ENCODE measurements at regions of chr10 and their contacts with region 1.

Region 1: GRCh38 chr10:119650692-119651513 is at the start of gene BAG3:
- H3K4me3 ChIP-seq: peak within 1 kb of the TSS; percentile 83
- H3K27ac ChIP-seq: peak within 1 kb of the TSS; percentile 86
- H3K4me1 ChIP-seq: peaks cover 25% of the 10 kb centered on the region
- CTCF ChIP-seq: no peak

Region 2: GRCh38 chr10:119421887-119422681 is 228.8 kb before region 1 on chr10:
- CTCF ChIA-PET with region 1: no interaction called
- POLR2A ChIA-PET with region 1: no interaction called
- H3K4me3 ChIP-seq: no peak overlapping the region
- H3K27ac ChIP-seq: no peak overlapping the region
- H3K4me1 ChIP-seq: no peaks in the 10 kb centered on the region
- CTCF ChIP-seq: no peak

Region 3: GRCh38 chr10:119608316-119609155 is 42.4 kb before region 1 on chr10:
- CTCF ChIA-PET with region 1: interaction called, 11 read pairs
- POLR2A ChIA-PET with region 1: interaction called, 5 read pairs
- H3K4me3 ChIP-seq: no peak overlapping the region
- H3K27ac ChIP-seq: no peak overlapping the region
- H3K4me1 ChIP-seq: no peaks in the 10 kb centered on the region
- CTCF ChIP-seq: peak; percentile 86

Region 4: DNA sequence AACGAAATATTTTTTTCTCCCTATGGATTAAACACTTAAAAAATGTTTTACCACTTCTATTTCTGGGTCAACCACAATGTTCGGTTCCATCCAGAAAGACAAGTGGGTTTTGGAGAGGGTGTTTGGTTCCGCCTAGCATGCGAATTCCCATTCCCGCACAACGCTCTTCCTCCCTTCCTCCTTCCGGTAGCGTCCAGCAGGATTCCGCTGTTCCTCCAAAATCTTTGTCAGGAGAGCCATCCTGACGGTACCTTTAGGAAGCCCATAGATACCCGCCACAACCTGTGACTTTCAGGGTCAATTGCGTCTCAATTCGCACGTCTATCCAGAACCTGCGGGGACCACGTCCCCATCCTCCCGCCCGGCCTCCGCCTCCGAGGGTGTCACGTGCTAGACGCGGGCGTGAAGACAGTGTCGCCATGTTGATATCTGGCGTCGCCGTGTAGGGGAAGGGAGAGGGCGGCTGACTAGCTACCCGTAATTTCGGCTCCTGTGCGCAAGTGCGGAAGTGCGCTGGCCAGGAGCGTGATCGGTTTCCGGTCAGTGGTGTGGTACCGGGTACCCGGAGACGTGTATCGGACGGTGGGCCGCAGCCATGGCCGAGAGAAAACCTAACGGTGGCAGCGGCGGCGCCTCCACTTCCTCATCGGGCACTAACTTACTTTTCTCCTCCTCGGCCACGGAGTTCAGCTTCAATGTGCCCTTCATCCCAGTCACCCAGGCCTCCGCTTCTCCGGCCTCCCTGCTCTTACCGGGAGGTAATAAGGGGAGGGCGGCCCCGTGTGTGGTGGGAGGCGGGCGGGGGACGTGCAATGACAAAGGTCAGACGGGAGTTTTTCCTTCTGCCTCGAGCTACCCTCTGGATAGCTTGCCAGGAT is 241.5 kb after region 1 on chr10 and contains the start of gene SEC23IP:
- CTCF ChIA-PET with region 1: no interaction called
- POLR2A ChIA-PET with region 1: interaction called, 10 read pairs
- H3K4me3 ChIP-seq: peak within 1 kb of the TSS; percentile 77
- H3K27ac ChIP-seq: peak within 1 kb of the TSS; percentile 66; the same call in 1 of the 2 replicates
- H3K4me1 ChIP-seq: peaks cover 27% of the 10 kb centered on the region
- CTCF ChIP-seq: no peak